ENCODE measurements at regions of chr19 and their contacts with region 1.

Region 1: GRCh38 chr19:40529093-40529954 is 47.3 kb upstream of the SHKBP1 start:
- DNase-seq: peak; percentile 81 to 86
- ATAC-seq: peak; percentile 86 to 96 (median 90)
- H3K4me3 ChIP-seq: peak overlapping the region in 9 of 10 donors; percentile 44 to 65 (median 59)
- H3K27ac ChIP-seq: peak overlapping the region in 2 of 10 donors; percentile 55 to 72
- H3K4me1 ChIP-seq: peaks cover 0 to 14% (median 9%) of the 10 kb centered on the region in 9 donors
- H3K27me3 ChIP-seq: peaks cover 0 to 17% (median 0%) of the 10 kb centered on the region in 7 donors
- CTCF ChIP-seq: peak; percentile 94 to 98 (median 96)

Region 2: DNA sequence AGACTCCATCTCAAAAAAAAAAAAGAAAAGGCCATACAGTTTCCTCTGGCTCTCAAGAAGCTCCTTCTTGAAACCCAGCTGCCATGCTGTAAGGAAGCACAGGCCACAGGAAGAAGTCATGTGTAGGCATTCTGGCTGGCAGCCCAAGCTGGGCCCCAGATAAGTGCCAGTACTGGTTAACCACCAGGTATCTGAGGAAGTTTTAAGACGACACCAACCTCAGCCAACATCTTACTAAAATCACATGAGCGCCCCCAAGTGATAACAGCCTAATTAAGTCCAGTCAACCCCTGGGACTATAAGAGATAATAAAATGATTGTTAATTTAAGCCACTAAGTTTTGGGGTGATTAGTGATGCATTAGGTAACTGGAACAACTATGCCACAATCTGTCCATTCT is 216.8 kb before region 1 on chr19:
- intact Hi-C with region 1: loop called in 5 of 10 experiments (anchors 5 to 10 kb)
- DNase-seq: no peak
- ATAC-seq: no peak
- H3K4me3 ChIP-seq: no peak overlapping the region
- H3K27ac ChIP-seq: no peak overlapping the region
- H3K4me1 ChIP-seq: peaks cover 0 to 11% (median 0%) of the 10 kb centered on the region in 9 donors
- H3K27me3 ChIP-seq: no peaks in the 10 kb centered on the region
- CTCF ChIP-seq: no peak

Region 3: DNA sequence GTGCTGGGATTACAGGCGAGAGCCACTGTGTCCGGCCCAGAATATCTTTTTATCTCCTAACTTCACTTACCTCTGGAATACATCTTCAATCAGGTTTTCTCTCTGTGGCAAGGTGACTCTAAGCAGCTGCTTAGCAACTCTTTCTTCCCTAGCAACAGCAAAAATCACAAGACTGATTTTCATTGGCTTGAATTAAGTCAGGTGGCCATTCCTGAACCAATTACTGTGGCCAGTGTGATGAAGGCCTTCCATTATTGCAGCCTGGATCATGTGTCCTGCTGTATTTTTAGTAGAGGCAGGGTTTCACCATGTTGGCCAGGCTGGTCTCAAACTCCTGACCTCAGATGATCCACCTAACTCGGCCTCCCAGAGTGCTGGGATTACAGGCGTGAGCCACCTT is 62.8 kb after region 1 on chr19:
- intact Hi-C with region 1: loop called in 6 of 10 experiments (anchors 2 to 5 kb)
- DNase-seq: no peak
- ATAC-seq: peak in 2 of 8 donors; percentile 24 to 25
- H3K4me3 ChIP-seq: no peak overlapping the region
- H3K27ac ChIP-seq: no peak overlapping the region
- H3K4me1 ChIP-seq: peaks cover 2 to 11% (median 7%) of the 10 kb centered on the region in 9 donors
- H3K27me3 ChIP-seq: peaks cover 0 to 23% (median 12%) of the 10 kb centered on the region in 7 donors
- CTCF ChIP-seq: no peak

Measured in heart right ventricle (tissue), 16 donors.